Heart right ventricle (tissue), 16 donors: ENCODE measurements at regions of chr14 and their contacts with region 1.

Region 1: DNA sequence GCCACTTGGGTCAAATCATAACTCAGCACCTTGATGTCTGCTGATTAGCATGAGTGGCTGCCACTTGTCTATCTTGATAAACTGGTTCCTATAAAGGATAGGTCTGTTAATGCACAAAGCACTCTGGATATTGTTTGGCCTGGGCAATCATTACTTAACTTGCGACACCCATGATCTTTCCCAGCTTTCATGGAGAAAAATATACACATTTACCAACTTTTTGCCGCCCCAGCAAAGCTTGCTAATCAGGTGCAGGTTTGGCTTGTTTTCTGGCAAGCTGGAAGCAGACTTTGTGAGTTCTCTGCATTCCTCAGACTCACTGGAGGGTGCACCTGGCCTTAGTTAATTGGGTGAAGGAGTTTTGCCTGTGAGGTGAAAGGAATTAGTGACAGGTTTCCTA is 1126.4 kb upstream of the FLRT2 start:
- DNase-seq: no peak
- ATAC-seq: no peak
- H3K4me3 ChIP-seq: no peak overlapping the region
- H3K27ac ChIP-seq: no peak overlapping the region
- H3K4me1 ChIP-seq: no peaks in the 10 kb centered on the region
- H3K27me3 ChIP-seq: no peaks in the 10 kb centered on the region
- CTCF ChIP-seq: no peak

Region 2: DNA sequence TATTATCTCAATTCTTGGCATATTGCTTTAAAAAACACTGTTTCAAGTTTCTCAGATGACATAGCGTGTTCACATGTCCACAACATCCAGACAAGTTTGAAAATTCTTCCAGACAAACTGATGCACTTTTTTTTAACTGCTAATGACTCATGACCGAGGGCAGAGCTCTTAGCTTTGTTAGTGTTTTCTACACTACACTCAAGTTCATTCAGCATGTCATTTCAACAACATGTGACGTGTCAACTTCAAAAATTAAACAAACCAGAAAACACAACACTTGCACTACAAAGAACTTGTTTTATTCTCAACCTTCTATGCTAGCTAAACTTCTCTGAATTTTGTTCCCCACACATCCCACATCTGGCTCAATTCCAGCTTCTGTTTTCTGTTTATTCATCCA is 59.9 kb before region 1 on chr14:
- intact Hi-C with region 1: no loop called
- DNase-seq: no peak
- ATAC-seq: no peak
- H3K4me3 ChIP-seq: no peak overlapping the region
- H3K27ac ChIP-seq: no peak overlapping the region
- H3K4me1 ChIP-seq: no peaks in the 10 kb centered on the region
- H3K27me3 ChIP-seq: no peaks in the 10 kb centered on the region
- CTCF ChIP-seq: no peak

Region 3: GRCh38 chr14:84432676-84433075 is 29.1 kb after region 1 on chr14:
- intact Hi-C with region 1: no loop called
- DNase-seq: no peak
- ATAC-seq: no peak
- H3K4me3 ChIP-seq: no peak overlapping the region
- H3K27ac ChIP-seq: no peak overlapping the region
- H3K4me1 ChIP-seq: no peaks in the 10 kb centered on the region
- H3K27me3 ChIP-seq: no peaks in the 10 kb centered on the region
- CTCF ChIP-seq: no peak

Region 4: DNA sequence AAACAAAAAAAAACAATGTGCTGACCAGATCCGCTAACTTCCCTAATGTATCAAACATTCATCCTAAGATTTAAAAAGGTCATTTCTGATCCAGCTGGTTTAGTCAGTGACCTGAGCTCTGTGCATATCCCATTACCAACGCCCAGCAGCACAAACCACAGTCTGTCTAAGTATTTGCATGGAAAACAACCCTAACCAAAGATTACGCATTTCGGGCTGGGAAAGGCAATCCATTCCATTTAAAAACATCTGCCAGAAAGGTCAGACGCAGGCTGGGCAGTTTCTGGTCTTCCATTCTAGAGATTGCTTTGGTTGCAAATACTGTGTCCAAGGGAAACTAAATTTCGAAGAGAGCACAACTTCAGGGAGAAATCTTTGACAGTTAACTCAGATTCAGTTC is 1361.2 kb after region 1 on chr14:
- intact Hi-C with region 1: loop called in 1 of 10 experiments (anchors 10 kb)
- DNase-seq: no peak
- ATAC-seq: peak in 1 of 8 donors; percentile 69
- H3K4me3 ChIP-seq: no peak overlapping the region
- H3K27ac ChIP-seq: no peak overlapping the region
- H3K4me1 ChIP-seq: no peaks in the 10 kb centered on the region
- H3K27me3 ChIP-seq: no peaks in the 10 kb centered on the region
- CTCF ChIP-seq: no peak